Dorsolateral prefrontal cortex (tissue), 120 donors: ENCODE measurements at regions of chr12 and their contacts with region 1.

Region 1: DNA sequence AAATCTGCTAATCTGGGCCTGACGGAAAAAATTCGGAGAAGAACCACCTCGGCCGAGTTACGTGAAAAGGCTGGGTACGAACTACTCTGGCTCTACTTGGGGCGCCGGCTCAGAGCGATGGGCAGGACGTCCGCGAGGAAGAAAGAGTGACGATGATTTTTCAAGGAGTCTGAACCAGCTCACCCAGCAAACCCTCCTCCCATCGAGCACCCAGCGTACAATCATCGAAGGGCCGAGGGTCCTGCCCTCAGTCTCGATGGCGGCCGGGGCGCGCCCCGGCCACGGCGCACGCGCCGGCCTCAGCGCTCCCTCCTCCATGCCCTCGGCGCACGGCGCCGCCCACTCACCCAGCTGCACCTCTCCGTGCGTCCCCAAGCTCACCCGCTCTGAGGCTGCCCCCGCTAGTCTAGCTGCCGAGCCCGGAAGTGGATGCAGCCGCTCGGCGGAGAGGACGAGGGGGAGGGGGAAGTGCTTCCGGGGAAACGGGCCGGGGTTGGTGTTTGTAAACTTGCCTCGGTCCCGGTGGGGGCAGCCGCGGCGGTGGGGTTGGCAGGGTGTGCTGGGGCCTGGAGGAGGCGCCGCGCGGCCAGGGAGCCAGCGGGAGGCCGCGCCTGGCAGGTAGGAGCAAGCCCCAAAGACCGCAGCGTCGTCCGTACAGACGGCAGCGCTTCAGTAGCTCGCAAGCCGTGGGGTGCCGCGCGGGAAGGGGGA is at the starts of genes CSAD and ZNF740:
- DNase-seq: peak; percentile 92 to 99 (median 98)
- H3K4me3 ChIP-seq: peak within 1 kb of the TSS; percentile 52 to 91 (median 79)
- H3K27ac ChIP-seq: peak within 1 kb of the TSS; percentile 78 to 98 (median 95)
- H3K27me3 ChIP-seq: no peaks in the 10 kb centered on the region
- CTCF ChIP-seq: peak in 15 of 56 donors; percentile 4 to 50 (median 15)
- total RNA-seq, gene CSAD: 28.2 to 90.7 (median 62.4) TPM
- total RNA-seq, gene ZNF740: 29.1 to 79.4 (median 48.6) TPM

Region 2: GRCh38 chr12:53054112-53054833 is 126.1 kb before region 1 on chr12:
- intact Hi-C with region 1: loop called in 1 of 2 experiments (anchors 2 kb)
- DNase-seq: peak; percentile 96 to 98 (median 98)
- H3K4me3 ChIP-seq: peak overlapping the region; percentile 57 to 96 (median 77)
- H3K27ac ChIP-seq: peak overlapping the region; percentile 92 to 100 (median 99)
- H3K27me3 ChIP-seq: no peaks in the 10 kb centered on the region
- CTCF ChIP-seq: peak in 40 of 56 donors; percentile 13 to 73 (median 47)

Region 3: DNA sequence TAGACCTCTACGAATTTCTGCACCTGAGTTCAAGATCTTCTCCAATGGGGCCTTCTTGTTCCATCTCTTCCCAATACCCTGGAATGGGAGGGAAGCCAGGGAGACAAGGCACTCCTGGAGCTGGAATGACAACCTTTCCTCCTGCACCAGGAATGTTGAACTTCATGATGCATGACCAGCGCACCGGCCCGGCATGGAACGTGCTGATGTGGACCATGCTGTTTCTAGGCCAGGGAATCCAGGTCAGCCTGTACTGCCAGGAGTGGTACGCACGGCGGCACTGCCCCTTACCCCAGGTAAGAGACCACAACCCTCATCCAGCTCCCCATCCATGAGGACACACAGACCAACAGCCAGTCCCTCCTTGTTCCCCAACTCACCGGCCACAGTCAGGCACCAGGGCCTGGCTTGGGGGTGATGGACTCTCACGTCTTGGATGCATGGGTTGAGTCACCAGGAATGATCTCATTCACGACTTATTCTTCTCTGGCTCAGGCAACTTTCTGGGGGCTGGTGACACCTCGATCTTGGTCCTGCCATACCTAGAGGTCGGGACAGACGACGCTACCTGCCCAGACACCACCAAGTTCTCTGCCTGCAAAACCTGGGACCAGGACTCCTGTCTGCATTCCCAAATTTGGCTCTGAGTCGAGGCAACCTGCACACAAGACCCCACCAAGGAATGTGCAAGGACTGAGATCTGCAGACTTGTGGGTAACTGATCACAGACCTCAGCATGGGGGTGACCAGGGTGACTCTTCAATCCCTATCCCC is 56.6 kb before region 1 on chr12:
- intact Hi-C with region 1: no loop called
- DNase-seq: no peak
- H3K4me3 ChIP-seq: no peak overlapping the region
- H3K27ac ChIP-seq: no peak overlapping the region
- H3K27me3 ChIP-seq: no peaks in the 10 kb centered on the region
- CTCF ChIP-seq: no peak

Region 4: GRCh38 chr12:53441040-53441833 is 260.9 kb after region 1 on chr12 and contains the start of gene PRR13:
- intact Hi-C with region 1: loop called in 1 of 2 experiments (anchors 10 kb)
- DNase-seq: peak; percentile 93 to 99 (median 98)
- H3K4me3 ChIP-seq: peak within 1 kb of the TSS; percentile 55 to 97 (median 81)
- H3K27ac ChIP-seq: peak within 1 kb of the TSS; percentile 72 to 98 (median 93)
- H3K27me3 ChIP-seq: no peaks in the 10 kb centered on the region
- CTCF ChIP-seq: peak in 23 of 56 donors; percentile 2 to 46 (median 20)
- total RNA-seq, gene PRR13: 52.9 to 141 (median 93.1) TPM

Region 5: DNA sequence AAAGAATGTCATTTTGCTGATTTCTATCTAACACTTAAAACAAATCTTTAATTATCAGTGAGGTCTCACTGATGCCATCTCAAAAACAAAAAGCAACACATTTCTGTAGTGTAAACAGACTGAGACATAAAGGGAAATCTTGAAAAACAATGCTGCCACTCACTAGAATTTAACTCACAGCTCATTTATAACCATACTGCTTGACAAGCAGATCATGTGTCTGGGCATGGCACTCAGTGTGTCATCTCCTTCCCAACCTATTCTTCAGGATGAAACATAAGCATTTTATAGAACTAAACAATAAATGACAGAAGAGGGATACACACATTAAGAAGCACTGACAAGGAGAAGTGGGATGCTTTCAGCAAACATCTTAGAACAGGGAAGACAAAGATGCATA is 423.4 kb after region 1 on chr12:
- intact Hi-C with region 1: no loop called
- DNase-seq: peak in 1 of 10 donors; percentile 22
- H3K4me3 ChIP-seq: peak overlapping the region in 7 of 59 donors; percentile 1 to 33 (median 15)
- H3K27ac ChIP-seq: peak overlapping the region in 58 of 59 donors; percentile 77 to 98 (median 93)
- H3K27me3 ChIP-seq: no peaks in the 10 kb centered on the region
- CTCF ChIP-seq: peak in 1 of 56 donors; percentile 11